CD4-positive, alpha-beta memory T cell (primary cell): ENCODE measurements at regions of chr9 and their contacts with region 1.

Region 1: DNA sequence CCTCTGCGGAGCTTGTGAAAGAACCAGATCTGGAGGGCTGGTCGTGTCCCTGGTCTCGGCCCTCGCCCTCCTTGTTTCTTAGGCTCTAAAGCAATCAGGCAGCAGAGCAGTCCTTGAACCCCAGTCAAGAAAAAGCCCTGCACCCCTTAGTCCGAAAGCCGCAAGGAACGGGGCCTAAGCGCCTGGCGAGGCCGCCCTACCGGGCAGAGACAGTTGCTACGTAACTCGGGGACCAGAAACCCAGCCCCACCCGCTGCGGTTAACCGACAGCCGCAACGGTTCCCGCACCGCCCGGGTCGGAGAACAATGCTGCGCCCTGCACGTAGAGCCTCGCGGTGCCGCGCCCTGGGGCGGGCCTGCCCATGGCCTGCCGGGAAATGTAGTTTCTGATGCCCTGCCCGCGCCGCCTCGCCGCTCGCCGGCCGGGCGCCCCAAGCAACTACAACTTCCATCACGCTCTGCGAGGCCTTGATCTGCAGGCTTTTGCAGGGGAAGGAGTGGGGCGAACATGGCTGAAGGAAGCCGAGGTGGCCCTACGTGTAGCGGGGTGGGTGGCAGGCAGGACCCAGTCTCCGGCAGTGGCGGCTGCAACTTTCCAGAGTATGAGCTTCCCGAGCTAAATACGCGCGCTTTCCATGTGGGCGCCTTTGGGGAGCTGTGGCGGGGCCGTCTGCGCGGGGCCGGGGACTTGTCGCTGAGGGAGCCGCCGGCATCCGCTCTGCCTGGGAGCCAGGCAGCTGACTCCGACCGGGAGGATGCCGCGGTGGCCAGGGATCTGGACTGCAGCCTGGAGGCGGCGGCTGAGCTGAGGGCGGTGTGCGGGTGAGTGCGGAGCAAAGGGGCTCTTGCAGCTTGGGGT is at the start of gene SNAPC3:
- DNase-seq: peak; percentile 92 to 94 (median 94)
- H3K4me3 ChIP-seq: peak within 1 kb of the TSS; percentile 72 to 98
- H3K4me3 Mint-ChIP-seq: peak within 1 kb of the TSS; percentile 88 to 95 (median 93)
- H3K27ac ChIP-seq: peak within 1 kb of the TSS; percentile 62
- H3K27ac Mint-ChIP-seq: peak within 1 kb of the TSS; percentile 91 to 98 (median 95)
- H3K4me1 ChIP-seq: peaks cover 45% of the 10 kb centered on the region
- H3K4me1 Mint-ChIP-seq: peaks cover 22 to 43% (median 32%) of the 10 kb centered on the region in 4 donors
- H3K27me3 ChIP-seq: no peaks in the 10 kb centered on the region
- H3K27me3 Mint-ChIP-seq: no peaks in the 10 kb centered on the region
- total RNA-seq, gene SNAPC3: 33.3 to 34.2 TPM

Region 2: GRCh38 chr9:15295761-15296405 is 126.7 kb before region 1 on chr9:
- CTCF ChIA-PET with region 1: interaction called, 4 read pairs
- POLR2A ChIA-PET with region 1: interaction called, 9 read pairs
- intact Hi-C with region 1: loop called (anchors 1 kb)
- DNase-seq: peak; percentile 40 to 67 (median 57)
- H3K4me3 ChIP-seq: peak overlapping the region; percentile 31 to 46
- H3K4me3 Mint-ChIP-seq: peak overlapping the region; percentile 74 to 89 (median 85)
- H3K27ac ChIP-seq: peak overlapping the region; percentile 84
- H3K27ac Mint-ChIP-seq: peak overlapping the region; percentile 92 to 99 (median 97)
- H3K4me1 ChIP-seq: peaks cover 77% of the 10 kb centered on the region
- H3K4me1 Mint-ChIP-seq: peaks cover 61 to 87% (median 76%) of the 10 kb centered on the region in 4 donors
- H3K27me3 ChIP-seq: no peaks in the 10 kb centered on the region
- H3K27me3 Mint-ChIP-seq: no peaks in the 10 kb centered on the region

Region 3: DNA sequence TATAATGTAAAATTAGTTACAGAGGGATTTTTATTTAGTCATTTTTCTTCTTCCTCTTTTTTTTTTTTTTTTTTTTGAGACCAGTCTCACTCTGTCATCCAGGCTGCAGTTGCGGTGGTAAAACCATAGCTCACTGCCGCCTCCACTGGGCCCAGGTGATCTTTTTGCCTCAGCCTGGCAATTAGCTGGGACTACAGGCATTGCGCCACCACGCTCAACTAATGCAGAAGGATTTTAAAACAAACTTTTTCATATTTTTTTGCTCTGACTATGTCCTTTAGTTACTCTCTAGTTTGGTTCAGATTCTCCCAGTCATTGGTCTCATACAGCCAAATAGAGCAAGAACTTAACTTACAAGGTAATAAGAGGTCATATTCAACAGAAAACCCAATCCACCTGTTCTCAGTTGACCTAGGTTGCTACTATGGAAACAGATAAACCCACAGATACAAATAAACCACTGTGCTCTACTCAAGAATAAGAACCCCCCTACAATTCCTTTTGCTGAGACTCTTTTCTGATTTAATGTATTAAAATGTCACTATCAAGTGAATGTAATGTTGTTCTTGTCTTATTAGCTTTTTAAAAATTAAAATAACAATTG is 65.4 kb before region 1 on chr9:
- CTCF ChIA-PET with region 1: interaction called, 3 read pairs
- POLR2A ChIA-PET with region 1: interaction called, 4 read pairs
- intact Hi-C with region 1: loop called (anchors 5 kb)
- DNase-seq: peak in 4 of 5 donors; percentile 4 to 61 (median 28)
- H3K4me3 ChIP-seq: no peak overlapping the region
- H3K4me3 Mint-ChIP-seq: peak overlapping the region in 2 of 8 donors; percentile 45 to 61
- H3K27ac ChIP-seq: no peak overlapping the region
- H3K27ac Mint-ChIP-seq: peak overlapping the region in 4 of 7 donors; percentile 31 to 83 (median 62)
- H3K4me1 ChIP-seq: peaks cover 11% of the 10 kb centered on the region
- H3K4me1 Mint-ChIP-seq: peaks cover 8 to 28% (median 13%) of the 10 kb centered on the region in 4 donors
- H3K27me3 ChIP-seq: no peaks in the 10 kb centered on the region
- H3K27me3 Mint-ChIP-seq: no peaks in the 10 kb centered on the region

Region 4: GRCh38 chr9:15522130-15522755 is 99.6 kb after region 1 on chr9:
- CTCF ChIA-PET with region 1: no interaction called
- POLR2A ChIA-PET with region 1: no interaction called
- intact Hi-C with region 1: no loop called
- DNase-seq: no peak
- H3K4me3 ChIP-seq: no peak overlapping the region
- H3K4me3 Mint-ChIP-seq: no peak overlapping the region
- H3K27ac ChIP-seq: no peak overlapping the region
- H3K27ac Mint-ChIP-seq: no peak overlapping the region
- H3K4me1 ChIP-seq: no peaks in the 10 kb centered on the region
- H3K4me1 Mint-ChIP-seq: no peaks in the 10 kb centered on the region
- H3K27me3 ChIP-seq: no peaks in the 10 kb centered on the region
- H3K27me3 Mint-ChIP-seq: peaks cover 0 to 2% of the 10 kb centered on the region in 2 donors

Region 5: DNA sequence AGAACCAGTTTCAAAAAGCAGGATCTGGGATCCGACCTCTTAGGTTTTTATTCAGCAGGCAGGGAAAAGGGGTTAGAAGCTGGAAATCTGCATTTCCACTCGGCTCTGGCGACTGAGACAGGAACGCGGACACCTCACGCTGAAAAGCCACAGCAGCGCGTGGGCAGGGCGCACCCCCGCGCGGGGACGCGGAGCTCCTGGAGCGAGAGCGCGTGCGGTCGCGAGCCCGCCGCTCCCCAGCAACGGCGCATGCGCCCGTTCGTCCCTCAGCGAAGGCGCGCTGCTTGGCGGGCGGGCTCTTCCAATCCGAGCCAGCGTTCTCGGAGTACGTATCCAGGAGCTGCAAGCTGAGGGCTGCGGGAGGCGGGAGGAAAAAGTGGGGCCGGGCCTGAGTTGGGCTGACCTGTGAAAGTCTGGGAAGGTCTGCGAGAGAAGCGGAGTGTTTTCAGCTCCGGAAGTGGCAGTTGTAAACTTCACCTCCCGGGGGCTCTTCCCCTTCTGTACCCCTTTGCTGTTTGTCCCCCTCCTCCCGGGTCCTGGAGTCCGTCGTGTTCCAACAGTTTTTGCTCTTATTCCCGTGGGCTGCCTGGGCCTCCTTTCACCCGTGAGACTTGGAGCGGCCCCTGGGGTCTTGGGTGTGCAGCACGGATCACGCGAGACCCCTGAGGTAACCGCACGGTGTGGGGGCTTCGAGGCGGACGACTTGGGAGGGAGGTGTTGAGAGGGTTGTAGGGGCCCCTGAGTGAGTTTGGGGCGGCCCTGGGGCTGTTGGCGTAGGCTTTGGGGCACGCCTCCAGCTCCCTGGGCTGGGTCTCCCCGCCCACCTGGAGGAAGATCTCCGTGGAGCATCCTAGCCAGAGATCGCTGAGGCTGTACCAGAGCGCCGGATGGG is 130.3 kb after region 1 on chr9 and contains the start of gene CCDC171:
- CTCF ChIA-PET with region 1: no interaction called
- POLR2A ChIA-PET with region 1: interaction called, 12 read pairs
- intact Hi-C with region 1: loop called (anchors 1 kb)
- DNase-seq: peak; percentile 85 to 90 (median 87)
- H3K4me3 ChIP-seq: peak within 1 kb of the TSS; percentile 79 to 93
- H3K4me3 Mint-ChIP-seq: peak within 1 kb of the TSS; percentile 87 to 97 (median 96)
- H3K27ac ChIP-seq: peak within 1 kb of the TSS; percentile 45
- H3K27ac Mint-ChIP-seq: peak within 1 kb of the TSS; percentile 69 to 91 (median 87)
- H3K4me1 ChIP-seq: peaks cover 18% of the 10 kb centered on the region
- H3K4me1 Mint-ChIP-seq: peaks cover 4 to 22% (median 10%) of the 10 kb centered on the region in 4 donors
- H3K27me3 ChIP-seq: no peaks in the 10 kb centered on the region
- H3K27me3 Mint-ChIP-seq: no peaks in the 10 kb centered on the region
- total RNA-seq, gene CCDC171: 1.8 to 1.9 TPM